ENCODE measurements at regions of chr10 and their contacts with region 1.

Region 1: GRCh38 chr10:14200698-14201544 is 129.8 kb downstream of the FRMD4A start:
- DNase-seq: peak; percentile 39
- ATAC-seq: no peak
- H3K4me3 Mint-ChIP-seq: no peak overlapping the region
- H3K27ac Mint-ChIP-seq: no peak overlapping the region
- H3K4me1 Mint-ChIP-seq: no peaks in the 10 kb centered on the region
- H3K27me3 Mint-ChIP-seq: peaks cover 14% of the 10 kb centered on the region
- CTCF ChIP-seq: peak; percentile 7

Region 2: GRCh38 chr10:13949844-13950595 is 250.9 kb before region 1 on chr10:
- CTCF ChIA-PET with region 1: no interaction called
- POLR2A ChIA-PET with region 1: no interaction called
- intact Hi-C with region 1: no loop called
- DNase-seq: no peak
- ATAC-seq: no peak
- H3K4me3 Mint-ChIP-seq: no peak overlapping the region
- H3K27ac Mint-ChIP-seq: no peak overlapping the region
- H3K4me1 Mint-ChIP-seq: no peaks in the 10 kb centered on the region
- H3K27me3 Mint-ChIP-seq: no peaks in the 10 kb centered on the region
- CTCF ChIP-seq: no peak

Region 3: DNA sequence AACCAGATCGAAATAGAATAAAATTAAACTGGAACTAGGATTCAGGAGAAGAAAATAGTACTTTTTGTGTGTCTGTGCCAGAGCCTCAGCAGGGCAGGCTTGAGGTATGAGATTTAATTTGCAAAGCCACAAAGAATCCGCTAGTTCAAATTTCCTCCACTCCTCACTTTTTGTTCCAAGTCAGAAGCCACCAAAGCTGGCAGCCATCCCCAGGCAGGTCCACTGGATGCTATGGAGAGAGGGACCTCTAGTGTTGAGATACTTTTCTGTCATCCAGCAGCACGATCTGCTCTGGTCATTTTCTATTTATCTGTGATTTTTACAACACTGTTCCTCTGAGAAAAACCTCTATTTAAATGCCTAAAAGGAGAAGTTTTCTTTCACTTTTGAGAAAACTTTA is 277.7 kb after region 1 on chr10:
- CTCF ChIA-PET with region 1: interaction called, 24 read pairs
- POLR2A ChIA-PET with region 1: no interaction called
- intact Hi-C with region 1: loop called (anchors 5 kb)
- DNase-seq: peak; percentile 35
- ATAC-seq: peak; percentile 65
- H3K4me3 Mint-ChIP-seq: no peak overlapping the region
- H3K27ac Mint-ChIP-seq: no peak overlapping the region
- H3K4me1 Mint-ChIP-seq: no peaks in the 10 kb centered on the region
- H3K27me3 Mint-ChIP-seq: peaks cover 6% of the 10 kb centered on the region
- CTCF ChIP-seq: peak; percentile 56